Ascending aorta (tissue), 2 donors: ENCODE measurements at regions of chr1 and their contacts with region 1.

Region 1: GRCh38 chr1:86666368-86666767 is 38.0 kb upstream of the SH3GLB1 start:
- DNase-seq: no peak
- H3K4me3 ChIP-seq: no peak overlapping the region
- H3K27ac ChIP-seq: no peak overlapping the region
- H3K4me1 ChIP-seq: no peaks in the 10 kb centered on the region
- H3K27me3 ChIP-seq: no peaks in the 10 kb centered on the region
- CTCF ChIP-seq: no peak

Region 2: GRCh38 chr1:86487131-86487810 is 179.1 kb before region 1 on chr1:
- intact Hi-C with region 1: loop called (anchors 10 kb)
- DNase-seq: no peak
- H3K4me3 ChIP-seq: no peak overlapping the region
- H3K27ac ChIP-seq: no peak overlapping the region
- H3K4me1 ChIP-seq: no peaks in the 10 kb centered on the region
- H3K27me3 ChIP-seq: no peaks in the 10 kb centered on the region
- CTCF ChIP-seq: no peak

Region 3: DNA sequence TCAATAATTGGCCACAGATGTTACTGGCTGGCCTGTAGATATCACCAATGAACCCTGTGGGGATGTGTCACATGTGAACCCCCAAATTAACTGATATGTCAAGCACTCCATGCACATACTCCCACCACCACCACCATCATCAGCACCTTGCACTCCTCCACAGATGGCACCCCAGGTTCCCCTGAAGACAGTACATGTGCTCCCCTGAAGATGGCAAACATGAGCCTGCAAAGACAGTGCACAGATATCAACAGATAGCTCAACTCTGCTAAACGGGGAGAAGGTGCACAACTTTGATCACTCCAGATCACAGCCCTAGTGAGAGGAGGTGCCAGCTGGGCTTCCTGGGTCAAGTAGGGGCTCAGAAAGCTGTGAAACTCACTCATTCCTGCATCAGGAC is 45.1 kb before region 1 on chr1:
- intact Hi-C with region 1: no loop called
- DNase-seq: no peak
- H3K4me3 ChIP-seq: no peak overlapping the region
- H3K27ac ChIP-seq: no peak overlapping the region
- H3K4me1 ChIP-seq: no peaks in the 10 kb centered on the region
- H3K27me3 ChIP-seq: no peaks in the 10 kb centered on the region
- CTCF ChIP-seq: no peak

Region 4: GRCh38 chr1:86687595-86687994 is 21.2 kb after region 1 on chr1:
- intact Hi-C with region 1: no loop called
- DNase-seq: no peak
- H3K4me3 ChIP-seq: no peak overlapping the region
- H3K27ac ChIP-seq: no peak overlapping the region
- H3K4me1 ChIP-seq: no peaks in the 10 kb centered on the region
- H3K27me3 ChIP-seq: no peaks in the 10 kb centered on the region
- CTCF ChIP-seq: peak in 1 of 3 experiments; percentile 14